Activated T-helper 1 cell treated with anti-CD3 and anti-CD28 coated beads, Interleukin-12 subunit alpha, Interleukin-12 subunit beta, Interleukin-2, Interleukin-4 antibody, amounts not matched to agents 30 ng/mL and 10 ng/mL and 1 ng/mL, durations not matched to agents 14 hours and 24 hours and 36 hours (primary cell): ENCODE measurements at regions of chr4 and their contacts with region 1.

Region 1: DNA sequence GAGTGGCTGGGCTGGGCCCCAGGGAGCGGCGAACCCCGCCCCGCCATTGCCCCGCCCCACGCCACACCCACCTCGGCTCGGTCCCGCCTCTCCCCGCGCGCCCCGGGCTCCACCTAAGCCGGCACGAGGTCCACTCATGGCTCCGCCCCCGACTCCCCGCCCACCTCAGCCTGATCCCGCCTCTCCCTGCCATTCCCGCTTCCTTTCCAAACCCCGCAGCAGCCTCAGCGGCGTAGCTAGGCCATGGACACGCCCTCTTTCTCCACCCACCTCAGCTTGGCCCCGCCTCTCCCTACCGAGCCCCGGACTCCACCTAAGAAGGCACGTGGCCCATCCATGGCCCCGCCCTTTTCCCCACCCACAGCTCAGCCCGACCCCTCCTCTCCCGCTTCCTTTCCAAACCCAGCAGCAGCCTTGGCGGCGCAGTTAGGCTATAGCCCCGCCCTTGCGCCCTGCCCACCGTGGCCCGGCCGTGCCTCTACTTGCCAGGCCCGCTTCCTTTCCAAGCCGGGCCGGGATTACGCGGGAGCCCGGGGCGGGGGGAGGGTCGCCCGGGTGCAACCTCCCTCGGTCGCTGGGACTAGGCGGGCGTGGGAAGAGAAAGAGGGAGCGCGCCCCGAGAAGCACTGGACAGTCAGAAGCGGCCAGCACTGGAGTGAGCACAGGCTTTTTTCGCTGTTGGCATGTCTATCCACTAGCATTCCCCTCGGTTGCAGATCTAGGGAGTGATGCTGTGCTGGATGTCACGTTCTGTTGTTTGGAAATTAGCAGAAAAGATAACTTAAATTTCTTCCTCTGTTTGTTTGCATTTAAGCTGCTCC is at the start of gene RELL1:
- DNase-seq: peak; percentile 99
- H3K4me3 Mint-ChIP-seq: peak within 1 kb of the TSS; percentile 96
- H3K27ac Mint-ChIP-seq: peak within 1 kb of the TSS; percentile 98
- H3K4me1 Mint-ChIP-seq: peaks cover 40% of the 10 kb centered on the region
- H3K27me3 Mint-ChIP-seq: peaks cover 7% of the 10 kb centered on the region
- total RNA-seq, gene RELL1: 21.0 and 21.4 TPM in 2 replicates

Region 2: GRCh38 chr4:37452952-37453280 is 233.7 kb before region 1 on chr4:
- intact Hi-C with region 1: loop called (anchors 10 kb)
- DNase-seq: peak; percentile 19
- H3K4me3 Mint-ChIP-seq: peak overlapping the region; percentile 72
- H3K27ac Mint-ChIP-seq: no peak overlapping the region
- H3K4me1 Mint-ChIP-seq: peaks cover 15% of the 10 kb centered on the region
- H3K27me3 Mint-ChIP-seq: peaks cover 50% of the 10 kb centered on the region

Region 3: GRCh38 chr4:37675587-37676290 is 10.8 kb before region 1 on chr4:
- intact Hi-C with region 1: loop called (anchors 1 kb)
- DNase-seq: peak; percentile 45
- H3K4me3 Mint-ChIP-seq: peak overlapping the region; percentile 74
- H3K27ac Mint-ChIP-seq: peak overlapping the region; percentile 77
- H3K4me1 Mint-ChIP-seq: peaks cover 72% of the 10 kb centered on the region
- H3K27me3 Mint-ChIP-seq: no peaks in the 10 kb centered on the region

Region 4: DNA sequence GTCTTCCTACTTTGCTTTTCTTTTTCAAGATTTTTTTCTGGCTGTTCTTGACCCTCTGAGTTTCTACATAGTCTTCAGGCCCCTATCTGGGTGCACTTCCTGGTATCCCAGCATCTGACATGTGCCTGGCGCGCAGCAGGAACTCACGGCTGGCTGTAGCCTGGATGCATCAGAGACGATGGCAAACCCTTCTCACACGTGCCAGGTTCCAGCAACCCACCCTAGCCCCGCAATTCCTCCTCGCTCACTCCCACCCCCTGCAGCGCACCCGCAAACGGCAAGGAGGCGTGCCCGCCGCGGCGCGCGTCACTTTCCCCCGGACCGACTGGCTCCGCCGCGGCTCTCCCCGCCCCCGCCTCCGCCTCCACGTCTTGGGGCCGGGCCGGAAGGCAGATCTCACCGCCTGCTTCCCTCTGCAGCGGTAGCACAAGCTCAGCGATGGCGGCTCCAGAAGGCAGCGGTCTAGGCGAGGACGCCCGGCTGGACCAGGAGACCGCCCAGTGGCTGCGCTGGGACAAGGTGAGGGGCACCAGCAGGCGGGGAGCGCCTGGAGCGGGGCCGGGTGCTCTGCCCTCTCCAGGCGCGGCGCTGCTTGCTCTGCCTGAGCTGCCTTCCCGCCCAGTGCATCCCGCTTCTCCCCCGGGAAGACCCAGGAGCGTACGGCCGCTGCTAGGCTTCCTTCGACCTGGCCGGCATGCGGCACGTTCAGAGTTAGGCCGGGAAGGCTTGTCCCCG is 139.9 kb after region 1 on chr4 and contains the start of gene PGM2:
- intact Hi-C with region 1: loop called (anchors 1 kb)
- DNase-seq: peak; percentile 88
- H3K4me3 Mint-ChIP-seq: peak within 1 kb of the TSS; percentile 87
- H3K27ac Mint-ChIP-seq: peak within 1 kb of the TSS; percentile 86
- H3K4me1 Mint-ChIP-seq: peaks cover 40% of the 10 kb centered on the region
- H3K27me3 Mint-ChIP-seq: no peaks in the 10 kb centered on the region
- total RNA-seq, gene PGM2: 43.0 and 50.0 TPM in 2 replicates

Region 5: GRCh38 chr4:38663801-38664705 is 977.5 kb after region 1 on chr4 and contains the start of gene KLF3:
- intact Hi-C with region 1: loop called (anchors 2 kb)
- DNase-seq: peak; percentile 86
- H3K4me3 Mint-ChIP-seq: peak within 1 kb of the TSS; percentile 85
- H3K27ac Mint-ChIP-seq: peak within 1 kb of the TSS; percentile 53
- H3K4me1 Mint-ChIP-seq: peaks cover 55% of the 10 kb centered on the region
- H3K27me3 Mint-ChIP-seq: peaks cover 24% of the 10 kb centered on the region
- total RNA-seq, gene KLF3: 1.8 and 1.9 TPM in 2 replicates

Region 6: GRCh38 chr4:39527273-39528060 is 1840.9 kb after region 1 on chr4 and contains the start of gene UGDH:
- intact Hi-C with region 1: loop called (anchors 5 kb)
- DNase-seq: peak; percentile 91
- H3K4me3 Mint-ChIP-seq: peak within 1 kb of the TSS; percentile 99
- H3K27ac Mint-ChIP-seq: peak within 1 kb of the TSS; percentile 92
- H3K4me1 Mint-ChIP-seq: peaks cover 19% of the 10 kb centered on the region
- H3K27me3 Mint-ChIP-seq: no peaks in the 10 kb centered on the region
- total RNA-seq, gene UGDH: 26.0 and 30.6 TPM in 2 replicates